ENCODE measurements at regions of chr2 and their contacts with region 1.

Region 1: DNA sequence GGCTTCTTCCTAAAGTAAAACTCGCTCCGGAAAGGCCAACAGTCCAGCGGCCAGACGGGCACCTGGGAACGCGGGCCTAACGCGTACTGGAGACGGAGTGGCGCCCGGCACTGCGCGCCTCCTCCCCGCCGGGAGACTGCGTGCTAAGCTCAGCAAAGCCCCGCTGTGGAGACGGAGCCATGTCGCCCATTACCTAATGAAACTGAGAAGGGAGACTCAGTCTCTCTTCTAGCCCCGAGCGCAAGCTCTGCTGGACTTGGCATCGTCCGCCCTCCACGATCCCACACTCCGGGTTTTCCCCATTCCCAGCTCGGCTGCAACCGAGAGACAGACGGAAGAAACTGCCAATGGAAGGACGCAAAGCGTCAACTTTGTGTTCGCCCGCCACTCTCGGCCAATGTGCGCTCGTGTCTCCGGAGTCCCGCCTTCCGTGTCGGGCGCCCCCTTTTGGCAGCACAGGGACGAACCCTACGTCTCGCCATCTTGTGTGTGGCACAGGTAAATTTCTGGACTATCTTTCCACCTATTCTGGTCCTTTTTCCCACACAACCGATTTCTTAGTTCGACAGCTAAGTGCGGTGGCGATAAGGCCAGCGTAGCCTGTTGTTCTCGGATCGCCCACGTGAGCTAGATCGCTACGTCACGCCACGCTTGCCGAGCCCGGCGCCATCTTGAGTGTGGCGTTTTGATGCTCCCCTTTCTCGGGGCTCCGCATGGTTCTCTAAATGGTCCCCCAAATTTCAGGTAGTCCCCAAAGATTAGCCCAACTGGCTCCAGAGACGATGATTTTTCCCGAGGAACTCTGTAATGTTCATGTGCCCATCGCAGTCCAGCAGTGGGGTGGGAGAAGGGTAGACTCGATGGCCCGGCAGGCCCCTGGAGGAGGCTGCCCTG is 1.3 kb upstream of the PTMA start:
- DNase-seq: peak; percentile 96 to 99 (median 98)
- H3K4me3 ChIP-seq: peak overlapping the region; percentile 73 to 100 (median 97)
- H3K27ac ChIP-seq: peak overlapping the region; percentile 97 to 100 (median 100)
- H3K27me3 ChIP-seq: no peaks in the 10 kb centered on the region
- CTCF ChIP-seq: peak; percentile 84 to 98 (median 93)

Region 2: GRCh38 chr2:231514103-231514950 is 192.7 kb before region 1 on chr2:
- intact Hi-C with region 1: loop called in 1 of 2 experiments (anchors 10 kb)
- DNase-seq: peak; percentile 97 to 99 (median 98)
- H3K4me3 ChIP-seq: peak overlapping the region; percentile 55 to 98 (median 85)
- H3K27ac ChIP-seq: peak overlapping the region; percentile 63 to 97 (median 92)
- H3K27me3 ChIP-seq: no peaks in the 10 kb centered on the region
- CTCF ChIP-seq: peak in 23 of 56 donors; percentile 4 to 47 (median 31)

Region 3: DNA sequence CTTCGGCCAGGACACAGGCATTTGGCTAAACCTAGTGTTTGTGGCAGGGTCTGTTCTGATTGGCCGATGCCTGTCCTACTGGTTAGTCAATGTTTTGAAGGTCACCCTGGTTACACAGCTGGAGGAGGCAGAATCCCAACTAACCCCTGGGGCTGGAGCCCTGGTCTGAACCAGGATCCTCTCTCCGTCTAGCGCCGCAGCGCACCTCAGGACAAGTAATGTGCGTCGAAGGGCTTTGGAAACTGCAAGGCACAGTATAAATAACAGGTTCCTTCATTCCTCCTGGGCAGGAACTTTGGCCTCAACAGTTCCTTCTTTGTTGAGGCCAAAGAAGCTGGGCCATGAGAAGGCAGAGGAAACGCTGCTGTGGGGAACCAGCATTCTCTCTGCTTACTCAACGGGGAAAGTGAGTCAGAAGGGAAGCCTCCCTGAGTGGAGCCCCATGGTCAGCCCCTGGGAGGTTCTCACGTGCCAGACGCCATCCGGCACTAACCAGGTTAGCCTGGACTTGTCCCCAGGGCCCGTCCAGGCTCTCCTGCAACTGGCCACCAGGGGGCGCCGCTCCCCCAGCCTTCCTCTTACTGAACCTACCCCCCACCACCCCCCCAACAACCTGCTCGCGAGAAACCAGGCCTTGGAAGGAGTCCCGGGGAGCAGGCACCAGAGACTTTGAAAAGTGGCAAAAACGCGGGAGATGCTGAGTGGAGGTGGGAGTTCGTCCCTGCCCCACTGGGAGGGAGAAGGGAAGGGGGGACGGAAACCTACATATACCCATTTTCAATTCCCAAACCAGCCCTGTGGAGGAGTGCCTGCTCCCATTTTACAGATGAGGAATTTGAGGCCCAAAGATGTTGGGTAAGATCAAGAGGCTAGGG is 94.6 kb before region 1 on chr2:
- intact Hi-C with region 1: loop called (anchors 1 to 2 kb)
- DNase-seq: peak; percentile 85 to 94 (median 92)
- H3K4me3 ChIP-seq: peak overlapping the region in 17 of 59 donors; percentile 8 to 79 (median 66)
- H3K27ac ChIP-seq: peak overlapping the region; percentile 95 to 100 (median 100)
- H3K27me3 ChIP-seq: no peaks in the 10 kb centered on the region
- CTCF ChIP-seq: peak; percentile 87 to 100 (median 98)

Region 4: DNA sequence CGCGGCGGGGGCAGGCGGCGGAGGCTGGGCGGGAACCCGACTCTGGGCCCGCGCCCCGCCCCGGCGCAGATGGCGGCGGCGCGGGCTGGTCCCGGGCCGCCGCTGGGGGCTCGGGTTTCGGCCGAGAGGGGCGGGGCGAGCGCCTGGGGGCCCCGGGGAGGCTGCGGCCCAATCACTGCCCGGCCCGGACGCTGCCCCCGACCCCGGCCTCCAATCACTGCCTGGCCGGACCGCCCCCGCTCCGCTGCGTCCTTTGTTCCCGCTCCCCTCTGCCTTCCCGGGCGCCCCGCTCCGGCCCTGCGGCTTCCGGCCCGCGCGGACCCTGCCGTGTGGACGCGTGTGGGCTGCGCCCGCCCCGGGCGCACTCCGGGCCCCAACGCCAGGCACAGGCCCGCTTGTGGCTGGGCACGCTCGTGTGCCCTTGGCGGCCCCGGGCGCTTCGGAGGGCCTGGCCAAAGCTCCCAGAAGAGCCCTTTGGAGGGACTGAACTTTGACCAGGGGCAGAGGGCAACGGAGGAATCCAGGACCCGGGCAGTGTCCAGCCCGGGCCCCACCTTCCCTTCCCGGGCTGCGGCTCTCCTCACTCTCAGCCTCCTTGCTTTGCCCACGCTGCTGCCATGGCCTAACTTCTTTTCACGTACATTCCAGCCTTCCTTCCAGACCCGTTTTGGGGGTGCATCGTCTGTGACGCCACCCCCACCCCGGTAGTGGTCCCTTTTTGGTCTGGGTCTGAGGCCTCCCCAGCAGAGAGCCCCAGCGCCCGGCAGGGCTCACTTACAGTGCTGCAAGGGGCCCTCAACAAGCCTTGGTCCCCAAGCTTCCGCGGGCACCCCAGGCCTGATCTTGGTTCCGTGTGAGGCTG is 25.8 kb before region 1 on chr2:
- intact Hi-C with region 1: loop called (anchors 1 kb)
- DNase-seq: peak; percentile 73 to 91 (median 80)
- H3K4me3 ChIP-seq: peak overlapping the region; percentile 32 to 74 (median 61)
- H3K27ac ChIP-seq: peak overlapping the region; percentile 93 to 100 (median 98)
- H3K27me3 ChIP-seq: no peaks in the 10 kb centered on the region
- CTCF ChIP-seq: peak in 16 of 56 donors; percentile 6 to 47 (median 15)

Region 5: GRCh38 chr2:231780909-231781797 is 74.2 kb after region 1 on chr2 and contains the start of gene PDE6D:
- intact Hi-C with region 1: loop called in 1 of 2 experiments (anchors 5 kb)
- DNase-seq: peak; percentile 97 to 99 (median 98)
- H3K4me3 ChIP-seq: peak within 1 kb of the TSS; percentile 67 to 100 (median 92)
- H3K27ac ChIP-seq: peak within 1 kb of the TSS; percentile 63 to 97 (median 93)
- H3K27me3 ChIP-seq: no peaks in the 10 kb centered on the region
- CTCF ChIP-seq: peak in 22 of 56 donors; percentile 5 to 58 (median 22)
- total RNA-seq, gene PDE6D: 26.1 to 44.6 (median 33.3) TPM

Region 6: GRCh38 chr2:232521959-232522622 is 815.1 kb after region 1 on chr2:
- intact Hi-C with region 1: no loop called
- DNase-seq: peak in 7 of 10 donors; percentile 32 to 77 (median 59)
- H3K4me3 ChIP-seq: peak overlapping the region; percentile 5 to 66 (median 47)
- H3K27ac ChIP-seq: peak overlapping the region in 1 of 59 donors; percentile 48
- H3K27me3 ChIP-seq: peaks cover 0 to 57% (median 29%) of the 10 kb centered on the region in 45 donors
- CTCF ChIP-seq: peak; percentile 72 to 99 (median 94)

Measured in dorsolateral prefrontal cortex (tissue), 120 donors.